Activated naive CD8-positive, alpha-beta T cell treated with anti-CD3 and anti-CD28 coated beads, Interleukin-2, amount 10 ng/mL, durations not matched to agents 7 days and 5 days (primary cell): ENCODE measurements at regions of chr17 and their contacts with region 1.

Region 1: GRCh38 chr17:74736513-74737298 is at the start of gene RAB37:
- DNase-seq: peak; percentile 78
- ATAC-seq: peak; percentile 16
- H3K4me3 Mint-ChIP-seq: peak within 1 kb of the TSS; percentile 87
- H3K27ac Mint-ChIP-seq: peak within 1 kb of the TSS; percentile 88
- H3K4me1 Mint-ChIP-seq: peaks cover 41% of the 10 kb centered on the region
- H3K27me3 Mint-ChIP-seq: peaks cover 18% of the 10 kb centered on the region
- total RNA-seq, gene RAB37: 24.7 to 27.5 TPM

Region 2: GRCh38 chr17:74659898-74660297 is 76.8 kb before region 1 on chr17:
- POLR2A ChIA-PET with region 1: interaction called, 37 read pairs
- DNase-seq: no peak
- ATAC-seq: no peak
- H3K4me3 Mint-ChIP-seq: no peak overlapping the region
- H3K27ac Mint-ChIP-seq: no peak overlapping the region
- H3K4me1 Mint-ChIP-seq: peaks cover 6% of the 10 kb centered on the region
- H3K27me3 Mint-ChIP-seq: peaks cover 60% of the 10 kb centered on the region

Region 3: GRCh38 chr17:74671031-74671771 is 65.5 kb before region 1 on chr17:
- POLR2A ChIA-PET with region 1: no interaction called
- DNase-seq: peak; percentile 86
- ATAC-seq: peak; percentile 93
- H3K4me3 Mint-ChIP-seq: no peak overlapping the region
- H3K27ac Mint-ChIP-seq: no peak overlapping the region
- H3K4me1 Mint-ChIP-seq: no peaks in the 10 kb centered on the region
- H3K27me3 Mint-ChIP-seq: peaks cover 60% of the 10 kb centered on the region

Region 4: GRCh38 chr17:74748529-74749365 is 12.0 kb after region 1 on chr17 and contains the start of gene NHERF1:
- POLR2A ChIA-PET with region 1: interaction called, 50 read pairs
- DNase-seq: peak; percentile 99
- ATAC-seq: peak; percentile 85
- H3K4me3 Mint-ChIP-seq: peak within 1 kb of the TSS; percentile 93
- H3K27ac Mint-ChIP-seq: peak within 1 kb of the TSS; percentile 77
- H3K4me1 Mint-ChIP-seq: peaks cover 56% of the 10 kb centered on the region
- H3K27me3 Mint-ChIP-seq: no peaks in the 10 kb centered on the region
- total RNA-seq, gene NHERF1: 241 to 244 TPM

Region 5: DNA sequence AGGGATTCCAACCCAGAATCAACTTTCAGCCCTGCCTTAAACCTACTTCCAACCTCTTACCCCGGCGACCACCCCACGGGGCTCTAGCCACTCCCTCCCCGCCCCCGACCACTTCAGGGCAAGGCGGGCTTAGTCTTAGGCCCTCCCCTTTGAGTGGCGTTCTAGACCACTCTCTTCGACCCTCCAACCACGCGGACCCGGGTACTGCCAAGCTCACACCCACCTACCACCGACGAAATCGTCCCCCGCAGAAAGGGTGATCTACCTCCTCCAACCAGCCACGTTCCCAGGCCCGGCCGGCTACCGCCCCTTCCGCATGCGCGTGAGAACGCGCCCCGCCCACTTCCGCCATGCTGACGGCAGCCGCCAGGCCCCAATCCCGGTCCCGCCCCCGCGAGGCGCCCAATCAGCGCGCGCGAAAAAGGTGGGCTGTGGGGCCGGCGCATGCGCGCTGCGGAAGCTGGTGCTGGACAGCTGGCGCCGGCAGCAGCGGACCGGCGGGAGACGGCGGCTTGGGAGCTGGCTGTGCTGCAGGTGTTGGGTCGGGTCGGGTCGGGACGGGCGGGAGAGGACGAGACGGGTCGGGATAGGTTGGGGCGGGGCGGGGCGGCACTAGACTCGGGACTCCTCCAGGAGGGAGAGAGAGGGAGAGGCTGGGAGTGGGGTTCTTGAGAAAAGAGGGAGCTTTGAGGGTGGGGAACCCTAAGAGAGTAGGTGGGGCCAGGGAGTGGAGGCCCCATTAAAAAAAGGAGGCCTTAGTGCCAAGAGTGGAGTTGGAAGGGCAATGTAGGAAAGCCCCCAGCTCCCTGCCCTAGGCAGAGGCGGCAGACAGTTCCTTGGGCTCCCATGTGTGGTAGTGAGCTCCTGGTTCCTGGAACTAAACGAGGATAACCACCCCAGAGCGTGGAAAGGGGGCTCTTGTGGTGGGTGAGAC is 39.6 kb after region 1 on chr17 and contains the start of gene NAT9:
- POLR2A ChIA-PET with region 1: interaction called, 12 read pairs
- DNase-seq: peak; percentile 100
- ATAC-seq: peak; percentile 77
- H3K4me3 Mint-ChIP-seq: peak within 1 kb of the TSS; percentile 99
- H3K27ac Mint-ChIP-seq: peak within 1 kb of the TSS; percentile 94
- H3K4me1 Mint-ChIP-seq: peaks cover 53% of the 10 kb centered on the region
- H3K27me3 Mint-ChIP-seq: no peaks in the 10 kb centered on the region
- total RNA-seq, gene NAT9: 37.6 to 42.1 TPM